ENCODE measurements at regions of chr6 and their contacts with region 1.

Region 1: GRCh38 chr6:87742106-87742505 is 40.1 kb upstream of the AKIRIN2 start:
- DNase-seq: peak; percentile 80
- ATAC-seq: peak; percentile 90
- H3K4me3 ChIP-seq: no peak overlapping the region
- H3K4me3 Mint-ChIP-seq: peak overlapping the region; percentile 52
- H3K27ac ChIP-seq: peak overlapping the region; percentile 30 to 62
- H3K27ac Mint-ChIP-seq: peak overlapping the region; percentile 91
- H3K4me1 ChIP-seq: peaks cover 14 to 21% of the 10 kb centered on the region in 2 donors
- H3K4me1 Mint-ChIP-seq: peaks cover 24% of the 10 kb centered on the region
- H3K27me3 ChIP-seq: no peaks in the 10 kb centered on the region
- H3K27me3 Mint-ChIP-seq: no peaks in the 10 kb centered on the region
- CTCF ChIP-seq: no peak

Region 2: DNA sequence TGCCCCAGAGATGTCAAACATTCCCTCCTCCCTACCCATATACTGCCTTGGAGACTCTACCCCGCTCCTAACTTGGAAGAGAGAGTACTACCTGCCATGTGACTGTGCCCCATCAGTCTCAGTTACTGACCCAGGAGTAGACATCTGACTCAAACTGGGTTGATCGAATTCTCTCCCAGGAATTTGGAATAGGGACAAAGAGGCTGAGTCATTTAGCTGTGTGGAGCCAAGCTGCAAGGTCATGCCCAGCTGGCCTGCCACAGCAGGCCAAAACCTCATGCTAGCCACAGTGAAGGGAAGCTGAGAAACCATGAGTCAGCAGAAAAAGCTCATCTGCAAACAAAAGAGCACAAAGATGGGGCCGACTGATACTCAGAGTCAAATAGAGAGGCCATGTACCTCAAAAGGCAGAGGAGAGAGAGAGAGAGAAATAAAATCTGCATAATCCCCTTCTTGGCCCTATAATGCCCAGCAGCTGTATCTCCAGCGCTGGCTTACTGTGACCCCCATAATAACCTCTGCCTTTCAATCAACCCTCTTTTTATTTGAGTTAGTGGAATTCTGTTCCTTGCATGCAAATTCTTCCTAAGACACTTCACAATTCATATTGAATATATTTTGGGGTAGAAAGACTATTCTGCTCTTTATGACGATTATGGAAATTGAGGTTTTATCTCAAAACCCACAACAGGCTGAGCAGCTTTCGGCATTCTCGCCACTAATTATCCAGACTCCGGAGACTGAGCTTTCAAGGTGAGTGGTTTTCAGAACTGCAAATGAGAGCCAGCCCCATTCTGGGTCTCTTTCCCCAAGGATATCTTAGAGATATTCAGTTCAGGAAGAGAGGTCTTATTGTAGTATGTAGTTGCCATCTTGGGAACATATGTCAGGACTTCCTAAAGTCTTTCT is 18.7 kb before region 1 on chr6:
- CTCF ChIA-PET with region 1: no interaction called
- POLR2A ChIA-PET with region 1: no interaction called
- intact Hi-C with region 1: loop called (anchors 1 kb)
- DNase-seq: no peak
- ATAC-seq: no peak
- H3K4me3 ChIP-seq: no peak overlapping the region
- H3K4me3 Mint-ChIP-seq: no peak overlapping the region
- H3K27ac ChIP-seq: no peak overlapping the region
- H3K27ac Mint-ChIP-seq: no peak overlapping the region
- H3K4me1 ChIP-seq: peaks cover 24 to 28% of the 10 kb centered on the region in 2 donors
- H3K4me1 Mint-ChIP-seq: peaks cover 30% of the 10 kb centered on the region
- H3K27me3 ChIP-seq: no peaks in the 10 kb centered on the region
- H3K27me3 Mint-ChIP-seq: no peaks in the 10 kb centered on the region
- CTCF ChIP-seq: no peak

Region 3: DNA sequence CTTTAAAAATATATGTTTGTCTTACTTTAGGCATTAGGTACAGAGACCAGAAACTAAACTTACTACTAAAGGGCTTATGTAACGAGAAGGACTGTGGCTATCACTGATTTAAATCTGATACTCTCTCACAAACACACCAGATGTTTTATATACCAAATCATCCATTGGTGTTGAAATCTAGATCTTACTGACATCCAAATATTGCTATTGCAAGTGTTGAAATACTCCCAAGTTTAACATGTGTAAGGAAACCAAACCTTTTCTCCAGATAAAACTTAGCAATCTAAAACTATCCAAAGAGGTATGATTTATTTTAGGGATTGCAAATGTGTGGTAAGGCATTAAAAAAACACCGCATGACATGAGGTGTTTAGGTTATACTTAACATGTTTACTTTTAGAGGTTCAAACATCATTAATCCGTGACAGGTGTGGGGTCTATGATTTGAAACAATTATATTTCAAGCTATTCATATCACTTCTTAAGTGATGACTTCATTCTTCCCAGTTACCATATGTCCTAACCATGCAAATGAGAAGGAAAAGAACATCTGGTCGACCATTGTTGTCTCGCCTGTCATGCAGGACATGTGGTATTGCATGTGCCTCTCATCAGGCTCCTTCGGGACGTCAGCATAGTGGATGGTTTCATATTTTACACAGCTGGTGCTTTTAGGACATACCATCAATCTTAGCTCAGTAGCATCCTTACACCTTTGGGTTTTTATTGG is 137.2 kb after region 1 on chr6:
- CTCF ChIA-PET with region 1: no interaction called
- POLR2A ChIA-PET with region 1: no interaction called
- intact Hi-C with region 1: no loop called
- DNase-seq: peak; percentile 41
- ATAC-seq: peak; percentile 36
- H3K4me3 ChIP-seq: no peak overlapping the region
- H3K4me3 Mint-ChIP-seq: no peak overlapping the region
- H3K27ac ChIP-seq: no peak overlapping the region
- H3K27ac Mint-ChIP-seq: no peak overlapping the region
- H3K4me1 ChIP-seq: no peaks in the 10 kb centered on the region
- H3K4me1 Mint-ChIP-seq: peaks cover 5% of the 10 kb centered on the region
- H3K27me3 ChIP-seq: peaks cover 0 to 6% (median 0%) of the 10 kb centered on the region in 4 experiments
- H3K27me3 Mint-ChIP-seq: peaks cover 25% of the 10 kb centered on the region
- CTCF ChIP-seq: no peak